A549 (cell line): ENCODE measurements at regions of chr22 and their contacts with region 1.

Region 1: GRCh38 chr22:37199103-37199759 is 11.2 kb upstream of the C1QTNF6 start:
- DNase-seq: peak; percentile 74 to 97
- ATAC-seq: peak; percentile 49 to 86
- H3K4me3 ChIP-seq: peak overlapping the region; percentile 69
- H3K27ac ChIP-seq: peak overlapping the region; percentile 99 to 100
- H3K4me1 ChIP-seq: peaks cover 52% of the 10 kb centered on the region
- CTCF ChIP-seq: peak; percentile 78
- EP300 ChIP-seq: no peak
- POLR2A ChIP-seq: peak; percentile 73
- RAD21 ChIP-seq: peak; percentile 57 to 76

Region 2: DNA sequence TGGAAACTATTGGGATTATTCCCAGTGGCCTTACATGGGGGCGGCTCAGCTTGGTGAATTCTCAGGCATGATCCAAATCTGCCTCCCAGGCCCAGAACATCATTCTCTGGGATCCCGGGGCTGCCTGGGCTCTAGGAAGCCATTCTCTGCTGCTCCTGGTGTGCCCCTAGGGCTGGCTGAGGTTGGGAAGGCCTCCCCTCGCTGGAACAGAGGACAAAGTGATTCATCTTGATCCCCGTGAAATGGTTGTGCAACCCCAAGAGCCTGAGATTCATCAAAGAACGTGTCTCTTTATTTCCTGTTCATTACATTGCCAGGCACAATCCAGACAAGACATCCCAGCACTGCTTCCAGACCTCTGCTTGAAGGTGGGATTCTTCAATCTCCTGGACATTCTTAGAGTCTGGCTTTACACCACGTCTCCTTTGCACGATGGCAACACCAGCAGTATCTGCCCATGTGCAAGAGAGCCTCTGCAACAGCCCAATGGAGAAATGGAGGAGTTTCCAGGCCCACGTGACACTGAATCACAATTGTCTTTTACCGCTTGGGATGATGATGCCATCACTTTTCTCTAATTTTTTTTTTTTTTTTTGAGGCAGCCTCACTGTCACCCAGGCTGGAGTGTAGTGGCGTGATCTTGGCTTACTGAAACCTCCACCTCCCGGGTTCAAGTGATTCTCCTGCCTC is 232.2 kb before region 1 on chr22:
- CTCF ChIA-PET with region 1: no interaction called
- POLR2A ChIA-PET with region 1: no interaction called
- DNase-seq: no peak
- ATAC-seq: no peak
- H3K4me3 ChIP-seq: no peak overlapping the region
- H3K27ac ChIP-seq: no peak overlapping the region
- H3K4me1 ChIP-seq: no peaks in the 10 kb centered on the region
- CTCF ChIP-seq: no peak
- EP300 ChIP-seq: no peak
- POLR2A ChIP-seq: no peak
- RAD21 ChIP-seq: no peak

Region 3: DNA sequence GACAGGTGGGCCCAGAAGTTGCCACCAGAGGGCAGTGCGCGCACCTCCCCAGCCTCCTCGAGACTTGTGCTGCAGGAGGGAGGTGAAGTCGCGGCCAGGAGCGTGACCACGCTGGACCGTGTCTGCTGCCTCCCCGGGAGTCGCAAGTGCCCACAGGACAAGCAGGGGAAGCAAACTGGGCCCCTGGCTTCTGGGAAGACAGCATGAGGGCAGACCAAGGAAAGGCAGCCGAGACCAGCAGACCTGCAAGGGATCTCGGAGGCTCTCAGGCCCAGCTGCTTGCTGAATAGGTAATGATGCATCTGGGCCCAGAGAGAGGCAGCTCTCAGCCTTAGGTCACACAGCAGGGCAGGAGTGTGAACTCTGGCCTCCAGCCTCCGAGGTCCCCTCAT is 32.6 kb before region 1 on chr22:
- CTCF ChIA-PET with region 1: interaction called, 126 read pairs
- POLR2A ChIA-PET with region 1: interaction called, 3 read pairs
- DNase-seq: peak; percentile 84 to 91
- ATAC-seq: peak; percentile 94 to 99
- H3K4me3 ChIP-seq: 0 out of 3 replicates have a peak overlapping the region, but pooled peaks have one; percentile 4
- H3K27ac ChIP-seq: peak overlapping the region; percentile 87
- H3K4me1 ChIP-seq: peaks cover 42% of the 10 kb centered on the region
- CTCF ChIP-seq: peak; percentile 80
- EP300 ChIP-seq: no peak
- POLR2A ChIP-seq: no peak; the same call in 1 of the 2 replicates
- RAD21 ChIP-seq: peak; percentile 77 to 85

Region 4: DNA sequence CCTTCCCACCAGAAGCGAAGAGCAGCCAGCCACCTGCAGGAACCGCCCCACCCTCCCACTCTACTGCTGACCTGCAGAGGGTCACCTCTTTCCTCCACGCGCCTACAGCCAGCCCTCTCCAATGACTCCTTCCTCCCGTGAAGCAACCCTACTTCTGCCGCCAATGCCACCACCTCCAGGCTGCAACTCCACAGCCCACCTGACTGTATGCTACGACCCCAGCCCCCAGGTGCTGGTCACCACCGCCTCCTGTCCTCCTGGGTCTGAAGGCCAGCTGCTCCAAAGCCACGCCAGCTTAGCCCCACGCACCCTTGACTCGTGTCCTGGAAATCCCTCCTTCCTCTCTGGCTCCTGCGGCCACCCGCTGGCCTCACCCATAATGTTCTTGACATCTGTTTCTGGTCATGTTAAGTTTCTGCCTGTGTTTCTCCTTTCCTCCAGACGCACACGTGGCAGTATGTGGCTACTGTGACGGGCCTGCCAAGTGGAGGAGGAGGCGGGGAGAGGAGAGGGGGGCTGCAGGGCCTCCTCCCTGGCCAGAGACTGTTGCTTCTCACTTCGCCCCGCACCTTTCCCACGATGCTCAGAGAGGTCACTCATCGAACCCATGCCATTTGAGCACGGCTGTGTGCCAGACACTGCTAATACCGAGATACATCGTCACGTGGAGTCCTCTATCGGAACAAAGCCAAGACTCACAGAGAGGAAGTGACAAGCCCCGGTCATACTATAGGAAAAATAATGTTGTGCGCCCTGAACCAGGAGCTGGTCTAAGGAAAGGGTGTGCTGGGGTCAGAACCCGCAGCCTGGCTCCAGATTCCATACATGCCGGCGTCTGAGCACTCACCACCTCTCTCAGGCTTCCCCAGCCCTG is 22.8 kb before region 1 on chr22:
- CTCF ChIA-PET with region 1: interaction called, 38 read pairs
- POLR2A ChIA-PET with region 1: interaction called, 5 read pairs
- DNase-seq: no peak
- ATAC-seq: no peak
- H3K4me3 ChIP-seq: no peak overlapping the region
- H3K27ac ChIP-seq: peak overlapping the region; percentile 79 to 88
- H3K4me1 ChIP-seq: peaks cover 46% of the 10 kb centered on the region
- CTCF ChIP-seq: no peak
- EP300 ChIP-seq: no peak
- POLR2A ChIP-seq: no peak
- RAD21 ChIP-seq: no peak

Region 5: GRCh38 chr22:37186228-37186996 is 12.8 kb before region 1 on chr22:
- CTCF ChIA-PET with region 1: interaction called, 15 read pairs
- POLR2A ChIA-PET with region 1: interaction called, 9 read pairs
- DNase-seq: peak; percentile 78 to 94
- ATAC-seq: peak; percentile 57 to 82; a peak in 4 of 6 replicates
- H3K4me3 ChIP-seq: peak overlapping the region; percentile 60
- H3K27ac ChIP-seq: peak overlapping the region; percentile 99 to 100
- H3K4me1 ChIP-seq: peaks cover 69% of the 10 kb centered on the region
- CTCF ChIP-seq: no peak
- EP300 ChIP-seq: no peak
- POLR2A ChIP-seq: no peak
- RAD21 ChIP-seq: no peak

Region 6: DNA sequence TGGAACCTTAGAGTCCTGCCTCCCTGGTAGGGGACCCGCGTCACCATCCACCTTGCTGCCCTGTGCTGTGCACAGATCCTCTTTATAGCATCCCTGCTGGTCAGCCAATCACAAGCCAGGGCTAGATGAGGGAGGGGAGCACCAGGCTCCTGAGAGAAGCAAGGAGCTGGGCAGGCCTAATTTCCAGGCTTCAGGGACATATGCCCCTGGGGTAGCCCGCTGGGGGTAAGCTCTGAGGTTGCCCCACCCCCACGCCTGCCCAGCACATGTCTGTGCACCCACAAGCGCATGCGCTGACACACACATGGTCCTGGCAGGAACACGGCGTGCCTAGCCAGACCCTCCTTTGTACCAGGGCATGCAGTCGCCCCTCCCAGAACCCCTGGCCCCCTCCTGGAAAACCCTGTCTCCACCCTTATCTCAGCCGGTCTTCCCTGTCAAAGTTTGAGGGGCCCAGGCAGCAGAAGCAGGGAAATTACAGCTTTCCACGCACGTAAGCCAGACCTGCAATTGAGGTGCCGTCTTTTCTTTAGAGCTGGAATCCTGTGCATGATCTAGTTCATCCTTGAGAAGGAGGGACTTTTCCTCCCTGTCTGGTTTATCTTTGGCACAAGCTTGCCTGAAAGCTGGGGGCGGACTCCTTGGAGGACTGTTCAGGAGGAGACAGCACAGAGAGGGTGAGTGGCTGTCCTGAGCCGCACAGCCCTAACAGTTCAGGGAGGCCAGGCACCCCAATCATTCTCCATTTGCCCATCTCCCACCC is 11.0 kb after region 1 on chr22:
- CTCF ChIA-PET with region 1: interaction called, 28 read pairs
- POLR2A ChIA-PET with region 1: interaction called, 7 read pairs
- DNase-seq: no peak
- ATAC-seq: no peak
- H3K4me3 ChIP-seq: no peak overlapping the region
- H3K27ac ChIP-seq: no peak overlapping the region
- H3K4me1 ChIP-seq: no peaks in the 10 kb centered on the region
- CTCF ChIP-seq: no peak
- EP300 ChIP-seq: no peak
- POLR2A ChIP-seq: no peak
- RAD21 ChIP-seq: no peak

Region 7: GRCh38 chr22:37218771-37219411 is 19.7 kb after region 1 on chr22:
- CTCF ChIA-PET with region 1: interaction called, 10 read pairs
- POLR2A ChIA-PET with region 1: no interaction called
- DNase-seq: no peak
- ATAC-seq: no peak
- H3K4me3 ChIP-seq: no peak overlapping the region
- H3K27ac ChIP-seq: no peak overlapping the region
- H3K4me1 ChIP-seq: no peaks in the 10 kb centered on the region
- CTCF ChIP-seq: no peak
- EP300 ChIP-seq: no peak
- POLR2A ChIP-seq: no peak
- RAD21 ChIP-seq: no peak